CD4-positive, alpha-beta T cell (primary cell): ENCODE measurements at regions of chr20 and their contacts with region 1.

Region 1: DNA sequence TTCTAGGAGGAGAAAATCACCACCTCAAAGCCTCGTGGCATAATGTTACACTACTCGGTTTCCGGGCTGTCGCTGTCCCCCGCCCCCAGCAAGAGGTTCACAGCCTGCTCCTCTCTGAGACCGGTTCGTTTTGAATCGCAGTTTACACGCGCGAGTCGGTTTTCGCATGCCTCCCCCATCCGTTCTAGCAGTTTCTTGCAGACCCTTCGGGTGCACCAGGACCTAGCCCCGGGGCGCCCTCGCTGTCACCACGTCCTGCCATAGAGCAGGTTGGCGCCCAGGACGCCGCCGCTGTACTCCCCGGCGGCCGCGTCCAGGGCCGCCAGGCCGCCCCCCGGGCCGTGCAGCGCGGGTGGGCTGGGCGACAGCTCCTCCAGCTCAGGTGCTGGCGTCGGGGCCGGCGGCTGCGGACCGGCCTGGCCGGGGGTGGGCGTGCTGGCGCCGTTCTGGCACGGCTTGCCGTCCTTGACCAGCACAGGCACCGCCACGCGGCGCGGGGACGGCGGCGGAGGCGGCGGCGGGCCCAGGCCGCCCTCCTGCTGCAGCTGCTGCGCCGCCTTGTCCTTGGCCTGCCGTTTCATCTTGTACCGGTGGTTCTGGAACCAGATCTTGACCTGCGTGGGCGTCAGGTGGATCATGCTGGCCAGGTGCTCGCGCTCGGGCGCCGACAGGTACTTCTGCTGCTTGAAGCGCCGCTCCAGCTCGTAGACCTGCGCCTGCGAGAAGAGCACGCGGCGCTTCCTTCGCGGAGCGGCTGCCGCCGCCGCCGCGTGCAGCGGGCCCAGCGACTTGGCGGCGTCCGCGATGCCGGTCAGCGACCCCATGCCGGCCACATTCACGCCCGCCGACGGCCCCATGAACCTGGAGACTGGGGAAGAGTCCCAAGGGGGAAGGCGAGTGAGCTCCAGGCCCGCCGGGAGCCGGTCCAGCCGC is 1.4 kb downstream of the NKX2-4 start:
- DNase-seq: peak in 12 of 14 experiments; percentile 12 to 83 (median 46)
- ATAC-seq: peak; percentile 89
- H3K4me3 ChIP-seq: no peak overlapping the region
- H3K4me3 Mint-ChIP-seq: peak overlapping the region; percentile 74
- H3K27ac ChIP-seq: no peak overlapping the region
- H3K27ac Mint-ChIP-seq: peak overlapping the region; percentile 35
- H3K4me1 ChIP-seq: peaks cover 16% of the 10 kb centered on the region
- H3K4me1 Mint-ChIP-seq: peaks cover 27% of the 10 kb centered on the region
- H3K27me3 ChIP-seq: peaks cover 34 to 85% of the 10 kb centered on the region in 2 experiments
- H3K27me3 Mint-ChIP-seq: peaks cover 81% of the 10 kb centered on the region
- CTCF ChIP-seq: no peak

Region 2: DNA sequence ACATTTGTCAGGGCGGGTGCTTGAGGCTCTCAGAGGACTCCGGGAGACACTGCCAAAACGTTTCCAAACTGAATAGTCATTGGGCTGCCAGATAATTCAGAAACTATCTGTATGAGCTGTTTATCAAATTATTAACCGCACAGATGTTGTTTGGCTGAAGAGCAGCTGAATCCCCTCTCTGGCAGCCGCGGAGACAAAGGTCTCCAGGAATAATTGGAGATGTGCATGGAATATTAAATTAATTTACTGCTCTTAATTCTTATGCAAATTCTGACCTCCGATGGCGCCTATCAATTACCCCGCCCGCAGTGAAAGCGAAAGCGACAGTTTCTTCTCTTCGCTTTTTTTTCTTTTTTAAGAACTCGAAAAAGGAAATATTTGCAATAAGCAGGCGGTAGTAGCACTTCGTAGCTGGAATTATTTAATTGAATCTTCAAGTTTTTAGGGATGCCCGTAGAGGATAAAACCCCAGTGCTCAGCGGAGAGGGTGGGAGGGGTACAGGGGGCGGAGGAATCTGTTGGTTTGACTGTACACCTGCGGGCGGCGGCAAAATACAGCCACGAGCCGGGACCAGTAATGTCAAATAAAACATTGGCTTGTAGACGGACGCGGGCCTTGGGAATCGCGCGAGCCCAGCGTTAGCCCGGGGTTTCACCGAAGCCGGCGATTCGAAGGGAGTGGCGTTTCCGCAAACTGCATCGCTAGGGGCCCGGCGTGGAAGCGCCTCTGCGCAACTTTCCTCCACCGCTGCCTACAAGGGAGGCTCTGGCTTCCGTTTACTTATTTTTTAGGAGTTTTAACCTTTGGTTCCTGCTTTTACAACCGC is 296.0 kb before region 1 on chr20:
- CTCF ChIA-PET with region 1: no interaction called
- POLR2A ChIA-PET with region 1: no interaction called
- intact Hi-C with region 1: loop called (anchors 5 to 10 kb)
- DNase-seq: peak in 7 of 14 experiments; percentile 12 to 72 (median 51)
- ATAC-seq: peak; percentile 45
- H3K4me3 ChIP-seq: peak overlapping the region; percentile 68
- H3K4me3 Mint-ChIP-seq: peak overlapping the region; percentile 84
- H3K27ac ChIP-seq: peak overlapping the region in 1 of 2 donors; percentile 7
- H3K27ac Mint-ChIP-seq: peak overlapping the region; percentile 35
- H3K4me1 ChIP-seq: peaks cover 53% of the 10 kb centered on the region
- H3K4me1 Mint-ChIP-seq: peaks cover 52% of the 10 kb centered on the region
- H3K27me3 ChIP-seq: peaks cover 79 to 93% of the 10 kb centered on the region in 2 experiments
- H3K27me3 Mint-ChIP-seq: peaks cover 94% of the 10 kb centered on the region
- CTCF ChIP-seq: no peak

Region 3: GRCh38 chr20:21105429-21106170 is 290.3 kb before region 1 on chr20:
- CTCF ChIA-PET with region 1: no interaction called
- POLR2A ChIA-PET with region 1: no interaction called
- intact Hi-C with region 1: loop called (anchors 5 to 10 kb)
- DNase-seq: peak in 3 of 14 experiments; percentile 2 to 38 (median 24)
- ATAC-seq: no peak
- H3K4me3 ChIP-seq: no peak overlapping the region
- H3K4me3 Mint-ChIP-seq: no peak overlapping the region
- H3K27ac ChIP-seq: no peak overlapping the region
- H3K27ac Mint-ChIP-seq: no peak overlapping the region
- H3K4me1 ChIP-seq: peaks cover 50% of the 10 kb centered on the region
- H3K4me1 Mint-ChIP-seq: peaks cover 34% of the 10 kb centered on the region
- H3K27me3 ChIP-seq: peaks cover 74 to 86% of the 10 kb centered on the region in 2 experiments
- H3K27me3 Mint-ChIP-seq: peaks cover 92% of the 10 kb centered on the region
- CTCF ChIP-seq: no peak

Region 4: DNA sequence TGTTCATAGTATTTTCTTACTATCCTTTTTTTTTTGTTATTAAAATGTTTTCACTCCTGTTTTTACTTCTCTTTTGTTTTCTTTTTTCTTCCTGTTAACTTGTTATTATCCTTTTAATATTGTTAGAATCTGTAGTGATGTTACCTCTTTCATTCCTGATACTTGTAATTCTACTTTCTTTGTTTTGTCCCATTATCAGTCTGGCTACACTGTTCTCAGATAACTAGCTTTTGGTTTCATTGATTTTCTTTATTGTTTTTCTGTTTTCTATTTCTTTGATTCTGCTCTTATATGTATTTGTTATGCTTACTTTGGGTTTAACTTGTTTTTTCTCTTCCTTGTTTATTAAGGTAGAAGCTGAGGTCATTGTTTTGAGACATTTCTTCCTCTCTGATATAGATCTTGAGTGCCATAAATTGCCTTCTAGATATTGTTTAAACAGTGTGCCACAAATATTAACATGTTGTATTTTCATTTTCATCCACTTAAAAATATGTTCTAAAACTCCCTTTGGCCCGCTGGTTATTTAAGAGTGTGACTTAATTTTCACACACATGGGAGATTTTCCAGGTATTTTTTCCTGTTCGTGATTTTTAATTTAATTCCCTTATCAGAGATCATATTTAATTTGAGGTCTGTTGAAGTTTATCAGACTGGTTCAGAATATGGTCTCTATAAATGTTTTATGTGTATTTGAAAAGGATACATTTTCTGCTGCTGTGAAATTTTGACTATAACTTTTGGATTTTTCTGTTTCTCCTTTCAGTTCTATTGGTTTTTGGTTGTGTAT is 86.1 kb before region 1 on chr20:
- CTCF ChIA-PET with region 1: no interaction called
- POLR2A ChIA-PET with region 1: no interaction called
- intact Hi-C with region 1: loop called in 1 of 2 experiments (anchors 5 kb)
- DNase-seq: no peak
- ATAC-seq: no peak
- H3K4me3 ChIP-seq: no peak overlapping the region
- H3K4me3 Mint-ChIP-seq: peak overlapping the region; percentile 17
- H3K27ac ChIP-seq: no peak overlapping the region
- H3K27ac Mint-ChIP-seq: peak overlapping the region; percentile 8
- H3K4me1 ChIP-seq: peaks cover 29% of the 10 kb centered on the region
- H3K4me1 Mint-ChIP-seq: peaks cover 72% of the 10 kb centered on the region
- H3K27me3 ChIP-seq: no peaks in the 10 kb centered on the region
- H3K27me3 Mint-ChIP-seq: no peaks in the 10 kb centered on the region
- CTCF ChIP-seq: no peak

Region 5: DNA sequence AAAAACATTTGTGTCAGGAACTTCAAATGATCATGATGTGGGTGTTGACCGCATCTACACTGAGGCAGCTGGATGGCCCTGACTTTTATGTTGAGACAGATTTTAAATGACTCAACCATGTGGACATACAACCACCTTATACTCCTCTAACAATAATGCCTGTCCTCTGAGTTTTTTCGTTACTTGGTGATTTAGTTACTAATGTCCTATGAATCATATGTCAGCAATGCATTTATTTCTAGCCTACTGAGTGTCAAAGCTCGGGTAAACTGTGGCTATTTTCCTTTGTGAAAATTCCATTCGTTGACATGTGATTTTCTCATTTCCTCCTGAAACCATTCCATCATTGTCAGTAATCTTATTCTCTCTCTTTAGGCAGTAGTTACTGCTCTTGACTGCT is 40.3 kb after region 1 on chr20:
- CTCF ChIA-PET with region 1: no interaction called
- POLR2A ChIA-PET with region 1: no interaction called
- intact Hi-C with region 1: no loop called
- DNase-seq: no peak
- ATAC-seq: no peak
- H3K4me3 ChIP-seq: no peak overlapping the region
- H3K4me3 Mint-ChIP-seq: no peak overlapping the region
- H3K27ac ChIP-seq: no peak overlapping the region
- H3K27ac Mint-ChIP-seq: no peak overlapping the region
- H3K4me1 ChIP-seq: no peaks in the 10 kb centered on the region
- H3K4me1 Mint-ChIP-seq: no peaks in the 10 kb centered on the region
- H3K27me3 ChIP-seq: peaks cover 0 to 4% of the 10 kb centered on the region in 2 experiments
- H3K27me3 Mint-ChIP-seq: peaks cover 55% of the 10 kb centered on the region
- CTCF ChIP-seq: no peak

Region 6: DNA sequence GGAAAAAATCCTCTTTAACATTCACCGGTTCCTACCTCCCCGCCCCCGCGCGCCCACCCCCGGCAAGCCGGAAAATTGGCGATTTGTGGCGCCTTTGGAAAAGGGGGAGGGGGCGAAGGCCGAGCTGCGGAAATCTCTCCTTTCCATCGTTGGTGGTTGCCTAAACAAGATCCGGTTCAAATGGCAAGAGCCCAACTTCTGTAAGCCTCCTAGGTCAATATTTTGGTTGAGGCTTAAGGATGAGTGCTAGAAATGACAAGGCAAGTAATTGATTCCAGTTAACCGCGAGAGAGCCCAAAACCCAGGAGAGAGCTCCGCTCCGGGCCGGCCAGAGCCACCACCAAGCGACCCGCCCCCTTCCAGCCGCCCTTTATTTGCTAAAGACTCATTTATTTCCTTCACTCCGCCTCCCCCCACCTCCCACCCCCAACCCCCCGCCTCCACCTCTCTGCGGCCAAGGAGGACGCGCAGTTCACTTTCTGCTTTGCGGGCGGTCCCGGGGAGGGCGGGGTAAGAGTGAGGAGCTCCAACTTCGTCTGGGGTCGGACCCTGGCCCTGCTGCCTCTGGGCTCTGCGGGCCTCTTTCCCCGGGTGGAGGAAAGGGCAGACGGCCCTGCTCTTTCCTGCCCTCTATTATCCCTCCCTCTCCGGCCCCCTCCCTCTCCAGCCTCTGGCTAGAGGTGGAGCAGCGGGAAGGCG is 118.8 kb after region 1 on chr20:
- CTCF ChIA-PET with region 1: no interaction called
- POLR2A ChIA-PET with region 1: no interaction called
- intact Hi-C with region 1: loop called (anchors 5 kb)
- DNase-seq: no peak
- ATAC-seq: no peak
- H3K4me3 ChIP-seq: peak overlapping the region; percentile 16
- H3K4me3 Mint-ChIP-seq: peak overlapping the region; percentile 54
- H3K27ac ChIP-seq: no peak overlapping the region
- H3K27ac Mint-ChIP-seq: no peak overlapping the region
- H3K4me1 ChIP-seq: peaks cover 81% of the 10 kb centered on the region
- H3K4me1 Mint-ChIP-seq: peaks cover 70% of the 10 kb centered on the region
- H3K27me3 ChIP-seq: peaks cover 90 to 93% of the 10 kb centered on the region in 2 experiments
- H3K27me3 Mint-ChIP-seq: peaks cover 93% of the 10 kb centered on the region
- CTCF ChIP-seq: no peak

Region 7: GRCh38 chr20:21622097-21622857 is 226.3 kb after region 1 on chr20:
- CTCF ChIA-PET with region 1: no interaction called
- POLR2A ChIA-PET with region 1: no interaction called
- intact Hi-C with region 1: no loop called
- DNase-seq: no peak
- ATAC-seq: no peak
- H3K4me3 ChIP-seq: no peak overlapping the region
- H3K4me3 Mint-ChIP-seq: no peak overlapping the region
- H3K27ac ChIP-seq: no peak overlapping the region
- H3K27ac Mint-ChIP-seq: no peak overlapping the region
- H3K4me1 ChIP-seq: no peaks in the 10 kb centered on the region
- H3K4me1 Mint-ChIP-seq: peaks cover 6% of the 10 kb centered on the region
- H3K27me3 ChIP-seq: peaks cover 0 to 6% of the 10 kb centered on the region in 2 experiments
- H3K27me3 Mint-ChIP-seq: peaks cover 53% of the 10 kb centered on the region
- CTCF ChIP-seq: no peak